ENCODE measurements at regions of chr12 and their contacts with region 1.

Region 1: GRCh38 chr12:55659486-55660385 is 23.0 kb downstream of the OR10P1 start:
- DNase-seq: peak; percentile 12
- H3K4me3 ChIP-seq: no peak overlapping the region
- H3K27ac ChIP-seq: no peak overlapping the region
- H3K4me1 ChIP-seq: no peaks in the 10 kb centered on the region
- H3K27me3 ChIP-seq: peaks cover 11 to 18% of the 10 kb centered on the region in 2 experiments
- CTCF ChIP-seq: peak; percentile 31 to 54
- POLR2A ChIP-seq: no peak

Region 2: DNA sequence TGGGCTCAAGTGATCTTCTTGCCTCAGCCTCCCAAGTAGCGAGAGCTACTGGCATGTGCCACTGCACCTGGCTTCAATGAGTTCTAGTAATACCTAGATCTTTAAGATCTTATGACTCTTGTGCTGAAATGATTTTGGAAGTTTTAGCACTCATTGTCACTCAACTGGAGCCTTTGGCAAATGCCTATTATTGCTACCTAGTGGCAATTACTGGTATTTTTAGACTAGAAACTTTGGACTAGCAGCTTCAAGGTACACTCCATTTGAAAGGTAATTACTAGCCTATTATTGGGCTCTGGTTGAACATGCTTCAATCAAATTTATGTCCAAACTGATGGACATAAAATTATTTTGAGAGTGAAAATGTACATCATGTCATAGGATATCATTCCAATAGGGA is 886.1 kb before region 1 on chr12:
- CTCF ChIA-PET with region 1: no interaction called
- POLR2A ChIA-PET with region 1: no interaction called
- dilution Hi-C with region 1: no loop called
- intact Hi-C with region 1: no loop called
- DNase-seq: no peak
- H3K4me3 ChIP-seq: no peak overlapping the region
- H3K27ac ChIP-seq: no peak overlapping the region
- H3K4me1 ChIP-seq: no peaks in the 10 kb centered on the region
- H3K27me3 ChIP-seq: no peaks in the 10 kb centered on the region
- CTCF ChIP-seq: no peak
- POLR2A ChIP-seq: no peak

Region 3: GRCh38 chr12:55619354-55620138 is 40.2 kb before region 1 on chr12:
- CTCF ChIA-PET with region 1: interaction called, 10 read pairs
- POLR2A ChIA-PET with region 1: no interaction called
- dilution Hi-C with region 1: no loop called
- intact Hi-C with region 1: no loop called
- DNase-seq: peak; percentile 95
- H3K4me3 ChIP-seq: no peak overlapping the region
- H3K27ac ChIP-seq: no peak overlapping the region
- H3K4me1 ChIP-seq: no peaks in the 10 kb centered on the region
- H3K27me3 ChIP-seq: peaks cover 4 to 6% of the 10 kb centered on the region in 2 experiments
- CTCF ChIP-seq: peak; percentile 49 to 77
- POLR2A ChIP-seq: no peak

Region 4: GRCh38 chr12:55670276-55670675 is 10.5 kb after region 1 on chr12:
- CTCF ChIA-PET with region 1: interaction called, 11 read pairs
- POLR2A ChIA-PET with region 1: no interaction called
- dilution Hi-C with region 1: no loop called
- intact Hi-C with region 1: no loop called
- DNase-seq: no peak
- H3K4me3 ChIP-seq: no peak overlapping the region
- H3K27ac ChIP-seq: no peak overlapping the region
- H3K4me1 ChIP-seq: no peaks in the 10 kb centered on the region
- H3K27me3 ChIP-seq: peaks cover 0 to 5% of the 10 kb centered on the region in 2 experiments
- CTCF ChIP-seq: no peak
- POLR2A ChIP-seq: no peak

Region 5: DNA sequence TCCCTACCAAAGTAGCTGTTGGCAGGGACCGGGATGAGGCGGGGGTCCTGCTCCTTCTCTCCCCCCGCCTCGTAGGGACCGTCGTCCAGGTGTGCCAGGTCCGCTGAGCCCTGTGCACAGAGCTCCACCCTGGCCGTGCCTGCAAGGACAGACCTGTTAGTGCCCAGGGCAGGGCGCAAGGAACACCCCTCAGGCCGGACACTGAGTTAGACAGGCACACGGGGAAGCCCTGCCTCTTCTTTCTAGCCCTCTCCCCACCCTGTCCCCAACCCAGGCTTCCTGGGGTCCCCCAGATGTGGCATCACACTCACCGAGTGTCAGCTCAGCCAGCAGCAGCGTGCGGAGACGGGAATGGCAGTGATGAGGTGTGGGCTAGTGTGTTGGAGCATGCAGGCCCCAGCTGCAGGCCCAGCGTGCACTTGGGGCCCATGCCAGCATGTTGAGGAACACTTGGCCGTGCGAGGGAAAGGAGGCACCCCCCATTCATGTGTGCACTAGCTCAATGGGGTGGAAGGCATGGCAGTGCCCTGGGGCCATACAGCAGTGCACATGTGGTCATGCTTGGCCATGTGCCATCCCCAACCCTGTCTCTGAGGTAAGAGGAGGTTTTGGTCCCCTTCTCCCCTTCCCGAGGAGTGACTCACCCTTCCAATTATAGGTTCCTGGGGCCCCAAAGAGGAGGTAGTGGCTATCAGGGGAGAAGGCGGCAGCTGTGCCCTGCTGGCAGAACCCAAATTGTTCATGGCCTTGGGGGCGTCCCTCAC is 40.7 kb after region 1 on chr12:
- CTCF ChIA-PET with region 1: interaction called, 15 read pairs
- POLR2A ChIA-PET with region 1: no interaction called
- dilution Hi-C with region 1: no loop called
- intact Hi-C with region 1: loop called (anchors 5 kb)
- DNase-seq: no peak
- H3K4me3 ChIP-seq: no peak overlapping the region
- H3K27ac ChIP-seq: no peak overlapping the region
- H3K4me1 ChIP-seq: no peaks in the 10 kb centered on the region
- H3K27me3 ChIP-seq: peaks cover 0 to 1% of the 10 kb centered on the region in 2 experiments
- CTCF ChIP-seq: no peak
- POLR2A ChIP-seq: no peak

Region 6: GRCh38 chr12:55940065-55940732 is 280.5 kb after region 1 on chr12:
- CTCF ChIA-PET with region 1: no interaction called
- POLR2A ChIA-PET with region 1: no interaction called
- dilution Hi-C with region 1: no loop called
- intact Hi-C with region 1: loop called (anchors 1 kb)
- DNase-seq: peak; percentile 85
- H3K4me3 ChIP-seq: no peak overlapping the region
- H3K27ac ChIP-seq: no peak overlapping the region
- H3K4me1 ChIP-seq: no peaks in the 10 kb centered on the region
- H3K27me3 ChIP-seq: no peaks in the 10 kb centered on the region
- CTCF ChIP-seq: peak; percentile 89 to 98
- POLR2A ChIP-seq: no peak

Measured in endothelial cell of umbilical vein (primary cell).